Mucosa of descending colon (tissue), 3 donors: ENCODE measurements at regions of chr13 and their contacts with region 1.

Region 1: DNA sequence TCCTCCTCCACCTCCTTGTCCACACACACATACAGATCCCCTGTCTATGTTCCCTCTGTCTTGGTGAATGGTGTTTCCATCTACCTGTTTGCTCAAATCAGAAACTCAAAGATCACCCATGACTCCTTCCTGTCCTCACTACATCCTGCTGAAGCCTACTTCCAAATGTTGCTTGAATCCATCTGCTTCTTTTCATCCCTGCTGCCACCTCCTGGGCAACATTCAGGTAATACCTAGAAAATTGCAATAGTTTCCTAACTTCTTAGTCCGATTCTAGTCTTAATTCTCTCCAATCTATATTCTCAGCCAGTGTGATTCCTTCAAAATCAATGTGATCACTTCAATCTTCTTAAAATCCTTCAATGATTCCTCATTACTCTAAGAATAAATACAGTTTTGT is 155.5 kb upstream of the STARD13 start:
- DNase-seq: peak in 1 of 3 donors; percentile 57
- ATAC-seq: peak; percentile 69
- H3K4me3 ChIP-seq: no peak overlapping the region
- H3K4me1 ChIP-seq: peaks cover 7% of the 10 kb centered on the region
- CTCF ChIP-seq: no peak

Region 2: GRCh38 chr13:33228648-33229445 is 212.2 kb before region 1 on chr13:
- intact Hi-C with region 1: loop called in 1 of 2 experiments (anchors 5 kb)
- DNase-seq: no peak
- ATAC-seq: peak; percentile 82
- H3K4me3 ChIP-seq: no peak overlapping the region
- H3K4me1 ChIP-seq: peaks cover 13% of the 10 kb centered on the region
- CTCF ChIP-seq: peak; percentile 87

Region 3: GRCh38 chr13:33740134-33740538 is 299.1 kb after region 1 on chr13:
- intact Hi-C with region 1: no loop called
- DNase-seq: no peak
- ATAC-seq: no peak
- H3K4me3 ChIP-seq: no peak overlapping the region
- H3K4me1 ChIP-seq: peaks cover 3% of the 10 kb centered on the region
- CTCF ChIP-seq: no peak